B cell (primary cell): ENCODE measurements at regions of chr15 and their contacts with region 1.

Region 1: GRCh38 chr15:64731012-64731806 is 44.2 kb downstream of the RBPMS2 start:
- DNase-seq: peak; percentile 88
- ATAC-seq: peak; percentile 75
- H3K4me3 ChIP-seq: no peak overlapping the region
- H3K4me3 Mint-ChIP-seq: no peak overlapping the region
- H3K27ac ChIP-seq: no peak overlapping the region
- H3K27ac Mint-ChIP-seq: peak overlapping the region; percentile 46
- H3K4me1 ChIP-seq: peaks cover 4 to 7% of the 10 kb centered on the region in 2 donors
- H3K4me1 Mint-ChIP-seq: peaks cover 10% of the 10 kb centered on the region
- H3K27me3 ChIP-seq: peaks cover 0 to 7% (median 2%) of the 10 kb centered on the region in 4 experiments
- H3K27me3 Mint-ChIP-seq: peaks cover 6% of the 10 kb centered on the region
- CTCF ChIP-seq: peak; percentile 94

Region 2: GRCh38 chr15:64702816-64703646 is 28.2 kb before region 1 on chr15:
- CTCF ChIA-PET with region 1: interaction called, 549 read pairs
- POLR2A ChIA-PET with region 1: no interaction called
- intact Hi-C with region 1: loop called (anchors 1 kb)
- DNase-seq: peak; percentile 93
- ATAC-seq: peak; percentile 96
- H3K4me3 ChIP-seq: peak overlapping the region; percentile 73 to 88 (median 87)
- H3K4me3 Mint-ChIP-seq: peak overlapping the region; percentile 95
- H3K27ac ChIP-seq: peak overlapping the region; percentile 65 to 83
- H3K27ac Mint-ChIP-seq: peak overlapping the region; percentile 94
- H3K4me1 ChIP-seq: peaks cover 45 to 46% of the 10 kb centered on the region in 2 donors
- H3K4me1 Mint-ChIP-seq: peaks cover 56% of the 10 kb centered on the region
- H3K27me3 ChIP-seq: no peaks in the 10 kb centered on the region
- H3K27me3 Mint-ChIP-seq: no peaks in the 10 kb centered on the region
- CTCF ChIP-seq: no peak

Region 3: DNA sequence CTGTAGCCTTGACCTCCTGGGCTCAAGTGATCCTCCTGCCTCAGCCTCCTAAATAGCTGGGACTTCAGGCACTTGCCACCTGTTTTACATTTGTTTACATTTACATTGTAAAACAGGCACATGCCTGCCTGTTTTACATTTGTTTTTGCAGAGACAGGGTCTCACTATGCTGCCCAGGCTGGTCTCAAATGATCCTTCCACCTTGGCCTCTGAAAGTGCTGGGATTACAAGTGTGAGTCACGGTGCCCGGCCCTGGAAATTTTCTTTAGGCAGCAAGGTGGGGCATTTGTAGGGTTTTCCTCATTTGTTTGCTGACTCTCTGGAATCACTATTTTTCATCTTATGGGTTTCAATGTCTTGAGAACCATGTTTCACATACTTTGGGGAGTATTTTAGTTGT is 69.3 kb after region 1 on chr15:
- CTCF ChIA-PET with region 1: interaction called, 236 read pairs
- POLR2A ChIA-PET with region 1: no interaction called
- intact Hi-C with region 1: no loop called
- DNase-seq: no peak
- ATAC-seq: no peak
- H3K4me3 ChIP-seq: no peak overlapping the region
- H3K4me3 Mint-ChIP-seq: no peak overlapping the region
- H3K27ac ChIP-seq: no peak overlapping the region
- H3K27ac Mint-ChIP-seq: no peak overlapping the region
- H3K4me1 ChIP-seq: peaks cover 0 to 7% of the 10 kb centered on the region in 2 donors
- H3K4me1 Mint-ChIP-seq: peaks cover 4% of the 10 kb centered on the region
- H3K27me3 ChIP-seq: no peaks in the 10 kb centered on the region
- H3K27me3 Mint-ChIP-seq: no peaks in the 10 kb centered on the region
- CTCF ChIP-seq: no peak

Region 4: GRCh38 chr15:64905119-64905831 is 174.1 kb after region 1 on chr15:
- CTCF ChIA-PET with region 1: interaction called, 152 read pairs
- POLR2A ChIA-PET with region 1: interaction called, 3 read pairs
- intact Hi-C with region 1: loop called (anchors 1 kb)
- DNase-seq: peak; percentile 85
- ATAC-seq: peak; percentile 95
- H3K4me3 ChIP-seq: peak overlapping the region; percentile 19 to 61 (median 44)
- H3K4me3 Mint-ChIP-seq: peak overlapping the region; percentile 84
- H3K27ac ChIP-seq: no peak overlapping the region
- H3K27ac Mint-ChIP-seq: peak overlapping the region; percentile 77
- H3K4me1 ChIP-seq: peaks cover 21 to 24% of the 10 kb centered on the region in 2 donors
- H3K4me1 Mint-ChIP-seq: peaks cover 36% of the 10 kb centered on the region
- H3K27me3 ChIP-seq: peaks cover 0 to 7% (median 0%) of the 10 kb centered on the region in 4 experiments
- H3K27me3 Mint-ChIP-seq: peaks cover 4% of the 10 kb centered on the region
- CTCF ChIP-seq: peak; percentile 86